Heart left ventricle (tissue), 16 donors: ENCODE measurements at regions of chr2 and their contacts with region 1.

Region 1: GRCh38 chr2:64133828-64134227 is 10.4 kb downstream of the PELI1 start:
- DNase-seq: no peak
- ATAC-seq: no peak
- H3K4me3 ChIP-seq: no peak overlapping the region
- H3K27ac ChIP-seq: peak overlapping the region in 1 of 12 donors; percentile 3
- H3K4me1 ChIP-seq: peaks cover 0 to 81% (median 18%) of the 10 kb centered on the region in 12 donors
- H3K27me3 ChIP-seq: no peaks in the 10 kb centered on the region
- CTCF ChIP-seq: no peak
- POLR2A ChIP-seq: no peak

Region 2: DNA sequence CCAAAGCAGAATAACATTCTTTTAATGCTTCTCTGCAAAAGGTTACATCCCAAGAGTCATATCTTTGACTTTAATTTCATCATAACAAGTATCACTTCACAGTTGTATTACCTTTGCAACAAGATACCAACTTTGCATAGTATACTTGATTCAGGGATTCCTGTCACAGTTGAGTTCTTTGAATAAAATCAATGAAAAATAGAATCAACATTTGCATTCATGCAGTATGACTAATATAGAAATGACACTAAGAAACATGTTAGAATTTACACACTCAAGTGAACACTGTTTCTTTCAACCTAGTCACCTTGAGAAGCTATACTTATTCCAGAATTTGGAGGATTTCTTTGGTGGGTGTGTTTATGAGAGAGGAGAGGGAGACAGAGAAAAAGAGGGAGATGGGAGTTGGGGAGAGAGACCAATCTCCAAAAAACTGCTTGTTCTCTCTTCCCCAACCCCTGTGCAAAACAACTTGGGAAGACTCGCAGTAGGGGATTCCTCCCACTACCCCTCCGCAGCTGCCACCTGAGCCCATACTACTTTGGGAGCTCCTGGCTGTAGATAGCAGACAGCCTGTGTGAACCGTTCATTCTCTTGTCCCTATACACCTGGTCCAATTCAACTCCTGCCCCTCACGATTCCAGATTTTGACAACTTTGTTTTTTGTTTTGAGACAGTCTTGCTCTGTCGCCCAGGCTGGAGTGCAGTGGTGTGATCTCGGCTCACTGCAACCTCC is 47.3 kb before region 1 on chr2:
- intact Hi-C with region 1: no loop called
- DNase-seq: no peak
- ATAC-seq: no peak
- H3K4me3 ChIP-seq: no peak overlapping the region
- H3K27ac ChIP-seq: no peak overlapping the region
- H3K4me1 ChIP-seq: no peaks in the 10 kb centered on the region
- H3K27me3 ChIP-seq: no peaks in the 10 kb centered on the region
- CTCF ChIP-seq: no peak
- POLR2A ChIP-seq: no peak

Region 3: GRCh38 chr2:64096542-64096941 is 37.3 kb before region 1 on chr2:
- intact Hi-C with region 1: loop called in 1 of 10 experiments (anchors 2 kb)
- DNase-seq: no peak
- ATAC-seq: no peak
- H3K4me3 ChIP-seq: no peak overlapping the region
- H3K27ac ChIP-seq: no peak overlapping the region
- H3K4me1 ChIP-seq: peaks cover 0 to 12% (median 0%) of the 10 kb centered on the region in 12 donors
- H3K27me3 ChIP-seq: no peaks in the 10 kb centered on the region
- CTCF ChIP-seq: no peak
- POLR2A ChIP-seq: no peak